Heart right ventricle (tissue), 16 donors: ENCODE measurements at regions of chr20 and their contacts with region 1.

Region 1: GRCh38 chr20:5919626-5920544 is 30.4 kb downstream of the TRMT6 start:
- DNase-seq: no peak
- ATAC-seq: no peak
- H3K4me3 ChIP-seq: no peak overlapping the region
- H3K27ac ChIP-seq: no peak overlapping the region
- H3K4me1 ChIP-seq: peaks cover 0 to 10% (median 0%) of the 10 kb centered on the region in 9 donors
- H3K27me3 ChIP-seq: peaks cover 0 to 7% (median 0%) of the 10 kb centered on the region in 7 donors
- CTCF ChIP-seq: no peak

Region 2: GRCh38 chr20:5806457-5807263 is 113.2 kb before region 1 on chr20:
- intact Hi-C with region 1: loop called in 1 of 10 experiments (anchors 10 kb)
- DNase-seq: no peak
- ATAC-seq: peak in 7 of 8 donors; percentile 33 to 83 (median 56)
- H3K4me3 ChIP-seq: no peak overlapping the region
- H3K27ac ChIP-seq: no peak overlapping the region
- H3K4me1 ChIP-seq: peaks cover 0 to 23% (median 15%) of the 10 kb centered on the region in 9 donors
- H3K27me3 ChIP-seq: no peaks in the 10 kb centered on the region
- CTCF ChIP-seq: peak in 6 of 9 donors; percentile 14 to 47 (median 29)

Region 3: GRCh38 chr20:5822569-5822968 is 97.3 kb before region 1 on chr20:
- intact Hi-C with region 1: loop called in 2 of 10 experiments (anchors 10 kb)
- DNase-seq: no peak
- ATAC-seq: peak in 1 of 8 donors; percentile 19
- H3K4me3 ChIP-seq: no peak overlapping the region
- H3K27ac ChIP-seq: no peak overlapping the region
- H3K4me1 ChIP-seq: peaks cover 0 to 26% (median 14%) of the 10 kb centered on the region in 9 donors
- H3K27me3 ChIP-seq: no peaks in the 10 kb centered on the region
- CTCF ChIP-seq: no peak

Region 4: DNA sequence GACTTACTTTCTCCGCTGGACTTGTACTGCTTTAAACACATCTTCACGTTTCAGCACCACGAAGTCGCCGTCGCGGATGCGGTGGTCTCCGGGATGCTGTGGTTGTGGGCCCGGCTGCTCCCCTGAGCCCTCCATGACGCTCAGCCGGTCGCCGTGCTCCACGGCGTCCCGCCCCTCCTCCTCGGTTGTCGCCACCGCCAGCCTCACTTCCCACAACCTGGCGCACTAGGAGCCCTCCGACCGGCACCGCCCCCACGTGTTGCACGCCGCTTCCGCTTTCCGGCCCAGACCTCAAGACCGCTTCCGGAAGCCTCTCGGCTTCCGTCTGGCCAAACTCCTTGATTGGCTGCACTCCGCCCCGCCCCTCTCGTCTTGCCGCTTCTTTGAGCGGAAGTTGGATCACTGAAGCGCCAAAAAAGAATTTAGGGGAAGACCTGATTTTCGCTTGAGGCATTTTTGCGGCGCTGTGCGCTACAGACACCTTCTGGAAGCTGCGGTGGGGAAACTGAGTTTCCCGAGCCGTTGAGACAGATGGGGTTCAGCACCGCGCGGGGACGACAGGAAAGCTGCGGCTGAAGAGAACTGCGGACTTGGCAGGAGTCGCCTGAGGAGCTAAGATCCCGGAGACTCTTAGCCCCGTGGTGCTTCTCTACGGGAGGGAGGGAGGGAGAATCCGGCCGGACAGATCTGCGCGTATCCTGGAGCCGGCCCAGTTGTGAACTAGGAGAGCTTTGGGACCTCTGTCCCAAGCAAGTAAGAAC is 30.6 kb after region 1 on chr20 and contains the starts of genes MCM8 and TRMT6:
- intact Hi-C with region 1: no loop called
- DNase-seq: peak; percentile 95
- ATAC-seq: peak; percentile 100
- H3K4me3 ChIP-seq: peak within 1 kb of the TSS; percentile 69 to 98 (median 84)
- H3K27ac ChIP-seq: peak within 1 kb of the TSS in 9 of 10 donors; percentile 59 to 87 (median 77)
- H3K4me1 ChIP-seq: peaks cover 0 to 37% (median 19%) of the 10 kb centered on the region in 9 donors
- H3K27me3 ChIP-seq: no peaks in the 10 kb centered on the region
- CTCF ChIP-seq: peak in 1 of 9 donors; percentile 8
- total RNA-seq, gene MCM8: 6.1 to 8.9 (median 6.4) TPM
- total RNA-seq, gene TRMT6: 7.6 to 12.8 (median 9.2) TPM

Region 5: GRCh38 chr20:6231551-6231950 is 311.7 kb after region 1 on chr20:
- intact Hi-C with region 1: no loop called
- DNase-seq: no peak
- ATAC-seq: no peak
- H3K4me3 ChIP-seq: no peak overlapping the region
- H3K27ac ChIP-seq: no peak overlapping the region
- H3K4me1 ChIP-seq: no peaks in the 10 kb centered on the region
- H3K27me3 ChIP-seq: no peaks in the 10 kb centered on the region
- CTCF ChIP-seq: no peak